Calu3 (cell line): ENCODE measurements at regions of chr9 and their contacts with region 1.

Region 1: DNA sequence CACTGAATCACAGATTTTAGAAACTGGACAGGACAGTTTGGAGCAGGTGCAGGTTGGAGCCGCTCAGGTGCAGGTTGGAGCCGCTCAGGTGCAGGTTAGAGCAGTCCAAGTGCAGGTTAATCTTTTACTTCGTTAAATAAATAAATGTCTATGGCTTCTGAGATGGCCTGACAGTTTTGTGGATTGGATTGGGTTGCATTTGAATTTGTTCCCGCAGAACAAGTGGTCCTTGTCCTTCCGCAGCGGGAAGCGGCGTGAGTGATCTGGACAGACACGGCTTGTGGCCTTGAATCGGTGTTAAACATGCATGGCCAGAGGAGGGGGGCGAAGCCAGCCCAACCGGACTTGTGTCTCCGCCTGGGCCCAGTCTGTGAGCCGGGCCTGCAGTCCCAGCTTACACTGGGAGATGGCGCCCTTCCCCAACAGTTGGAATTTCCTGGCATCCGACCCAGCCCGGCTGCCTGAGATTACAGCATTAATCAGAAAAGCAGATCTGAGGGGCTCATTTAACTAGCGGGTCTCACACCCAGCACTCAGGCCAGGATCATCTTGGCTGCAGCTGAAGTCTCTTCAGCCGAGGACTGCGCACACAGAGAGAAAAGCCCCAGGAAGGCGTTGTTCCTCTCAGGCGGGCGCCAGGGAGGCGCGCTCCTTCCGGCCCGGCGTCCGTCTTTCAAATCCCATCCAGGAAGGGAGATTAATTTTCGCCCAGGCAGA is 1.5 kb upstream of the OLFM1 start:
- DNase-seq: peak; percentile 76
- H3K4me3 Mint-ChIP-seq: no peak overlapping the region
- H3K27ac Mint-ChIP-seq: no peak overlapping the region
- H3K4me1 Mint-ChIP-seq: peaks cover 9% of the 10 kb centered on the region
- H3K27me3 Mint-ChIP-seq: peaks cover 32% of the 10 kb centered on the region
- CTCF ChIP-seq: no peak

Region 2: GRCh38 chr9:134917431-134918373 is 168.3 kb before region 1 on chr9 and contains the start of gene FCN1:
- CTCF ChIA-PET with region 1: no interaction called
- intact Hi-C with region 1: no loop called
- DNase-seq: no peak
- H3K4me3 Mint-ChIP-seq: no peak within 1 kb of the TSS
- H3K27ac Mint-ChIP-seq: no peak within 1 kb of the TSS
- H3K4me1 Mint-ChIP-seq: no peaks in the 10 kb centered on the region
- H3K27me3 Mint-ChIP-seq: no peaks in the 10 kb centered on the region
- CTCF ChIP-seq: no peak
- total RNA-seq, gene FCN1: not detected in 2 replicates

Region 3: DNA sequence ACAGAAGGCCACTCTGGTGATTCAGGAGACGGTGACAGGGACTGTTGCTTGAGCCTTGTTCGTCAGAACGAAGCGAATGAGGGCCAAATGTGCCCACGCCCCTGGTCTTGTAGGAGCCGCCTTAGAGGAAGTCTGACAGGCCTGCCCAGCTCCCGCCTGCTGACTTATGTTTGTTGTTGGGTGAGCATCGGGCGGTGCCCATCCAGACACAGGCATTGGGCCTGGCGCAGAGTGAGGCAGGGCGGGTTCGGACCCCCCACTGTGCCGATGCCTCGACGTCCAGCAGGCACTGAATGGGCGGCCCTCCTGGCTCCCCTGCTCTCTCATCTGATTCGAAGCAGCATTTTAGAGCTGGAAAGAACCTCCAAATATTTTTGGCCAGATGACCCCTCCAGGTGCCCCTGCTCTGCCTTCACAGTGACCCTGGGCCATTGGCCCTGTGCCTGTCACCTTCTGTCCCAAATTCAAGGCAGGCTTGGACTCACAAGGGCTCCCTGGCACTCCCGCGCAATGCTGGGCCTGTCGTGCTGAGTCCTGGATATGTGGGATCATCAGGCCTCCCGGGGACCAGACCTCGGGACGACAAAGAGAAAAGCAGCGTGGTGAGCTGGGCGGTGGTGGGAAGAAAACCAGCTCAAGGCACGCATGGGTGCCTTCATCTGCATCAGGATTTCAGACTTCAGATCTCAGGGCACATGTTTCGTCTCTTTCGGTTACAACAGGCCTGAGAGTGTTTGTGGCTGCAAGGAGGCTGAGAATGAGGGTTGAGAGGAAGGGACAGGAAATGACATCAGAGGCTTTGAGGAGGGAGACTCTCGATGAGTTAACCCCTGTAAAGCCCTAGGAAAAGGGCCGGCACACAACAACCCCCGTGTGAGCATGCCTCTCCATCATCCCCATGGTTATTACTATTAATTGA is 35.7 kb before region 1 on chr9:
- CTCF ChIA-PET with region 1: no interaction called
- intact Hi-C with region 1: no loop called
- DNase-seq: no peak
- H3K4me3 Mint-ChIP-seq: no peak overlapping the region
- H3K27ac Mint-ChIP-seq: no peak overlapping the region
- H3K4me1 Mint-ChIP-seq: no peaks in the 10 kb centered on the region
- H3K27me3 Mint-ChIP-seq: no peaks in the 10 kb centered on the region
- CTCF ChIP-seq: no peak

Region 4: DNA sequence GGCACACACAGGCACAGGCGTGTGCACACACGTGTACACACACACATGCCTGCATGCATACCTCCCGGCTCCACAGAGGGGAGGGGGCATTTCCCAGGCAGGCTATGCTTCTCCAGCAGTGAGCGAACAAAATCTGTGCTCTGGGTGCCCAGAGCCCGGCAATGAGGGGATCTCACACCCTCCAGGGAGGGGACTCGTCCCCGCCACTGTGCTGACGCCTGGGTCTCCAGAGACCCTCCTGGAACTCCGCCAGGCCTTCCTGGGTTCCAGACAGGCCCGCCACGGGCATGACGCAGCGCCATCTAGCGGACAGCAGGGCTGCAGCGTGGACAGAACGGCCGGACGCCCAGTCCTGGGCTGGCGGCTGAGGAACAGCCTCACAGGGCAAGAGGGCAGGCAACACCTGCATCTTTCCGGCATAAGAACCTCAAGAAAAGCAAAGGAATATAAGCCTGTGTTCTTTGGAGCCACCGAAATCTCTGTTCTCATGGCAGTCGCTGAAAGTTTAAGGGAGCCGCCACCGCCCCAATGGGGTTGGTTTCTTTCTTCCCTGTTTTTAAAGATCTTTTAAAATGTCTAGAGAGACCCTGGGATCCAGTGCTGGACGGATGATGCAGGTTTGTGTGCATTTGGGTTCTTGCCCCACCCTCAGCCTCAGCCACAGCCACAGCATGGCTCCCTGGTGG is 258.0 kb after region 1 on chr9:
- CTCF ChIA-PET with region 1: no interaction called
- intact Hi-C with region 1: loop called (anchors 2 kb)
- DNase-seq: peak; percentile 59
- H3K4me3 Mint-ChIP-seq: no peak overlapping the region
- H3K27ac Mint-ChIP-seq: no peak overlapping the region
- H3K4me1 Mint-ChIP-seq: no peaks in the 10 kb centered on the region
- H3K27me3 Mint-ChIP-seq: peaks cover 37% of the 10 kb centered on the region
- CTCF ChIP-seq: peak; percentile 56

Region 5: DNA sequence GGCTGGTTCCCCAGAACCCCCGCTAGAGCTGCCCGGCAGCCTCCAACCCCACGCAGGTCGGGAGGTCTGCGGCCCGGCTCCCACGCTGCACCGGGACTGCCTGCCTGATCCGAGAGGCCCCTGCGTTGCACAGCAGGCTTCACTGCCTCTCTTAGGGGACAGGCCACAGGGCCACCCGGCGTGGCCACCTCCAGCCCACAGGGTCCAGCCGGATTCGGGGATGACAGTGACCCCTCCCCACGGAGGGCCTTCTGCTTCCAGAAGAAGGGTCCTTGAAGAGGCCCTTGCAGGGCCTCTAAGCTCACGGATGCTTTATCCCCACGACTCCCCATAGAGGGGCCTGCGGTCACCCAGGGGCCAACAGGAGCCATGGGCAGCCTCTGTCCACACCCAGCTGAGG is 327.5 kb after region 1 on chr9:
- CTCF ChIA-PET with region 1: no interaction called
- intact Hi-C with region 1: loop called (anchors 2 kb)
- DNase-seq: no peak
- H3K4me3 Mint-ChIP-seq: no peak overlapping the region
- H3K27ac Mint-ChIP-seq: no peak overlapping the region
- H3K4me1 Mint-ChIP-seq: no peaks in the 10 kb centered on the region
- H3K27me3 Mint-ChIP-seq: peaks cover 26% of the 10 kb centered on the region
- CTCF ChIP-seq: no peak